Activated CD4-positive, alpha-beta T cell treated with anti-CD3 and anti-CD28 coated beads for 36 hours (primary cell): ENCODE measurements at regions of chr2 and their contacts with region 1.

Region 1: DNA sequence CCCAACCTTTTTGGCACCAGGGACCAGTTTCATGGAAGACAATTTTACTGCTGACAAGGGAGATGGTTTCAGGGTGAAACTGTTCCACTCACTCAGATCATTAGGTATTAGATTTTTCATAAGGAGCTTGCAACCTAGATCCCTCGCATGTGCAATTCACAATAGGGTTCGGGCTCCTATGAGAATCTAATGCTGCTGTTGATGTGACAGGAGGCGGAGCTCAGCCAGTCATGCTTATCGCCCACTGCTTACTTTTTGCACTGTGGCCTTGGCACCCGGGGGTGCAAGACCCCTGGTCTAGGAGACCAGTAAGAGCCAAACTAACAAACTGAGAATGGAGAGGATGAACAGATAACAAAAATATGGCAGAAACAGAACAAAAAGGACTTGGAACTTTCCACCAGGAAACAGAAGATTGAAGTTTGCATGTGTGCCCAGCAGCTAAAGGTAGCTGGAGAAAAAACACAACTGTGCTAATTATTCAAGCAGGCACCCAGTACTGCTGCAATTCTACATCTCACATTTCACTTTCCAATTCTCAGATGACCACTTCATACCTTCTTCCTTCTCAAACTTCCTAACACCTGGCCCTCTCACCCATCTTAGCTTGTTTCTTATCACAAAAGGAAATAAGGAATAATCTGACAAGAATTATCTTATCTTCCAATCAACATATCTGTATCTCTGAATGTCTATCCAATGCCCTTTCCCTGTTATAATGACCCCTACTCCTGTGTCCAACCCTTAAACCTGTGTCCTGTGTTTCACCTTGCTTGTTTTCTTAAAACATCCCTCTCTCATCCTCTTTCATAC is 24.8 kb downstream of the SP3 start:
- DNase-seq: no peak
- ATAC-seq: no peak
- H3K4me3 Mint-ChIP-seq: no peak overlapping the region
- H3K27ac Mint-ChIP-seq: peak overlapping the region; percentile 66
- H3K4me1 Mint-ChIP-seq: peaks cover 70% of the 10 kb centered on the region
- H3K27me3 Mint-ChIP-seq: no peaks in the 10 kb centered on the region

Region 2: DNA sequence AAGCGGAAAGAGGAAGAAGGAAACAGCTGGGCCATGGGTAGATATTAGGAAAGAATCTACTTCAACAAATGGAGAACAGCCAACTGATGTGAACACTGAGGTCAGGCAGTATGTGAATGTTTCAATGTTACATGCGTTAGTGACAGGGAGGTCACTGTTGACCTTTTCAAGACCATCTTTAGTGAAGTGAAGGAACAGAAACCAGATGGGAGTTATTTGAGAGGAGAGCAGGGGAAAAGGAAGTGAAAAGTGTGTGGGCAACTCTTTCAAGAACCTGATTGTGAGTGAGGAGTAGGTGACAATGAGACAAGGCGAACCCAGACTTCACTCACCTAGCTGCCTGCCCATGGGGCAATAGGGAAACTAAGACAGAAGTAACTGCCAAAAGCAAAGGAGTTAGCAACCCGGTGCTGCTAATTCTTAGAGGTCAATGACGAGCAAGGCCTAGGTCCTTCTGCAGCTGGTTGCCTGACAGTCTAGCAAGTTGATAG is 42.2 kb before region 1 on chr2:
- CTCF ChIA-PET with region 1: no interaction called
- POLR2A ChIA-PET with region 1: no interaction called
- intact Hi-C with region 1: loop called in 1 of 2 experiments (anchors 2 kb)
- DNase-seq: peak; percentile 18
- ATAC-seq: peak; percentile 21
- H3K4me3 Mint-ChIP-seq: no peak overlapping the region
- H3K27ac Mint-ChIP-seq: peak overlapping the region; percentile 14
- H3K4me1 Mint-ChIP-seq: peaks cover 24% of the 10 kb centered on the region
- H3K27me3 Mint-ChIP-seq: no peaks in the 10 kb centered on the region